ENCODE measurements at regions of chr20 and their contacts with region 1.

Region 1: DNA sequence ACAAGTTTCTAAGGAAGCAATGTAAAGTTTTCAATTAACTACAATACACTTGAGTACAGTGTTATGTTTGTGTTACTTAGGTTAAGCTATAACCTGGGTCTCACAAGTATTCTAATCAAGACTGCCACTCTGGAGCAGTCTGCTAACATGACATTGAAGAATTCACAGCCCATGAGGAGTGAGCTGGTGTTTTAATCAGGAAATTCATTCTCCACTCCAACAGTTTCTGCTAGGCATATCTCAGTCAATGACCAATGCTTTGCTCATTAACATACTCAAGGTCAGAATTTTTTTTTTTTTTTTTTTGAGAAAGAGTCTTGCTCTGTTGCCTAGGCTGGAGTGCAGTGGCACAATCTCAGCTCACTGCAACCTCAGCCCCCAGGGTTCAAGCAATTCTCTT is 59.6 kb upstream of the SAMHD1 start:
- DNase-seq: no peak
- ATAC-seq: no peak
- H3K4me3 Mint-ChIP-seq: no peak overlapping the region
- H3K27ac Mint-ChIP-seq: no peak overlapping the region
- H3K4me1 Mint-ChIP-seq: peaks cover 24% of the 10 kb centered on the region
- H3K27me3 Mint-ChIP-seq: no peaks in the 10 kb centered on the region

Region 2: DNA sequence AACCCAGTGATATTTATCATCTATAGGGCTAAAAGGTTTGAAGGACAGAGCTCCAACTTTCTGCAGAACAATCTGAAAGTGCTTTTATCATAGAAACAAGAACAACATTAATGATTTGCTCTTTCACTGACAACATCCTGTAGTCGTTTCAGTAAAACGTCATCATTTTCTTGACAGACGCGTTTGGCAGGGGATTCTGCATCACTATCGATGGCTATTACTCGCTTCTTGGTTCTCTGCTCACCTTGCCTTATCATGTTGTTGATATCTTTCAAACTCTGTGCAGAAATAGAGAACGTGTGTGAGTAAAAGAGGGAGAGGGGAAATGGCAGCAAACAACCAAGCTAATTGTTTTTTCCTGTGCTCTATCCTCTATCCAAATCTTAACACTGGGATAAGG is 12.5 kb before region 1 on chr20:
- POLR2A ChIA-PET with region 1: interaction called, 11 read pairs
- DNase-seq: no peak
- ATAC-seq: no peak
- H3K4me3 Mint-ChIP-seq: no peak overlapping the region
- H3K27ac Mint-ChIP-seq: peak overlapping the region; percentile 30
- H3K4me1 Mint-ChIP-seq: peaks cover 8% of the 10 kb centered on the region
- H3K27me3 Mint-ChIP-seq: no peaks in the 10 kb centered on the region

Region 3: GRCh38 chr20:37042986-37043972 is 32.1 kb after region 1 on chr20:
- POLR2A ChIA-PET with region 1: interaction called, 11 read pairs
- DNase-seq: peak; percentile 57
- ATAC-seq: peak; percentile 84
- H3K4me3 Mint-ChIP-seq: peak overlapping the region; percentile 88
- H3K27ac Mint-ChIP-seq: peak overlapping the region; percentile 99
- H3K4me1 Mint-ChIP-seq: peaks cover 34% of the 10 kb centered on the region
- H3K27me3 Mint-ChIP-seq: no peaks in the 10 kb centered on the region